ENCODE measurements at regions of chr14 and their contacts with region 1.

Region 1: DNA sequence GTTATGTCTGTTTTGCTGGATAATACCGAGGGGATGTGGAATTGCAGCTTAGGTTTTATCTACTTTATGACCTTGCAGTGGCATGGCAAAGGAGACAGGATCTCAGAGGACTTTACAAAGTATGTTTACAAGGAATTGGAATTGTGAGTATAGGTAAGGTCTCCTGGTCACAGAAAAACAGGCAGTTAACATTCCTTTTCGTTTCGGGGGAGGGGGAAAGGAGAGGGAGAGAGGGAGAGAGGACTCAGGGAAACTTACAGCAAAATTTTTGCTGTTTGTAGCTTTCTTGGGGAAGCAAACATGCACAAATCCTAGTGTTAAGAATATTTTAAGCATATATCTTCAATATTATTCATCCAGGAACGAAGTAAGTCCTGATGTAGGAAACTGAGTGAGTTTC is 590.5 kb upstream of the LRFN5 start:
- DNase-seq: no peak
- ATAC-seq: no peak
- H3K4me3 ChIP-seq: no peak overlapping the region
- H3K27ac ChIP-seq: no peak overlapping the region
- H3K4me1 ChIP-seq: no peaks in the 10 kb centered on the region
- H3K27me3 ChIP-seq: no peaks in the 10 kb centered on the region
- CTCF ChIP-seq: no peak

Region 2: GRCh38 chr14:41072776-41073175 is 56.6 kb after region 1 on chr14:
- CTCF ChIA-PET with region 1: no interaction called
- POLR2A ChIA-PET with region 1: no interaction called
- intact Hi-C with region 1: no loop called
- DNase-seq: no peak
- ATAC-seq: no peak
- H3K4me3 ChIP-seq: no peak overlapping the region
- H3K27ac ChIP-seq: no peak overlapping the region
- H3K4me1 ChIP-seq: no peaks in the 10 kb centered on the region
- H3K27me3 ChIP-seq: no peaks in the 10 kb centered on the region
- CTCF ChIP-seq: no peak

Region 3: GRCh38 chr14:41120402-41120801 is 104.2 kb after region 1 on chr14:
- CTCF ChIA-PET with region 1: no interaction called
- POLR2A ChIA-PET with region 1: no interaction called
- intact Hi-C with region 1: loop called (anchors 5 kb)
- DNase-seq: no peak
- ATAC-seq: no peak
- H3K4me3 ChIP-seq: no peak overlapping the region
- H3K27ac ChIP-seq: no peak overlapping the region
- H3K4me1 ChIP-seq: no peaks in the 10 kb centered on the region
- H3K27me3 ChIP-seq: no peaks in the 10 kb centered on the region
- CTCF ChIP-seq: no peak